Activated naive CD4-positive, alpha-beta T cell treated with anti-CD3 and anti-CD28 coated beads, Interleukin-2, amount 10 ng/mL, durations not matched to agents 7 days and 5 days (primary cell): ENCODE measurements at regions of chr3 and their contacts with region 1.

Region 1: GRCh38 chr3:40317061-40317855 is 7.8 kb downstream of the EIF1B start:
- DNase-seq: peak; percentile 57
- H3K4me3 Mint-ChIP-seq: no peak overlapping the region
- H3K27ac Mint-ChIP-seq: no peak overlapping the region
- H3K4me1 Mint-ChIP-seq: peaks cover 2% of the 10 kb centered on the region
- H3K27me3 Mint-ChIP-seq: peaks cover 4% of the 10 kb centered on the region

Region 2: DNA sequence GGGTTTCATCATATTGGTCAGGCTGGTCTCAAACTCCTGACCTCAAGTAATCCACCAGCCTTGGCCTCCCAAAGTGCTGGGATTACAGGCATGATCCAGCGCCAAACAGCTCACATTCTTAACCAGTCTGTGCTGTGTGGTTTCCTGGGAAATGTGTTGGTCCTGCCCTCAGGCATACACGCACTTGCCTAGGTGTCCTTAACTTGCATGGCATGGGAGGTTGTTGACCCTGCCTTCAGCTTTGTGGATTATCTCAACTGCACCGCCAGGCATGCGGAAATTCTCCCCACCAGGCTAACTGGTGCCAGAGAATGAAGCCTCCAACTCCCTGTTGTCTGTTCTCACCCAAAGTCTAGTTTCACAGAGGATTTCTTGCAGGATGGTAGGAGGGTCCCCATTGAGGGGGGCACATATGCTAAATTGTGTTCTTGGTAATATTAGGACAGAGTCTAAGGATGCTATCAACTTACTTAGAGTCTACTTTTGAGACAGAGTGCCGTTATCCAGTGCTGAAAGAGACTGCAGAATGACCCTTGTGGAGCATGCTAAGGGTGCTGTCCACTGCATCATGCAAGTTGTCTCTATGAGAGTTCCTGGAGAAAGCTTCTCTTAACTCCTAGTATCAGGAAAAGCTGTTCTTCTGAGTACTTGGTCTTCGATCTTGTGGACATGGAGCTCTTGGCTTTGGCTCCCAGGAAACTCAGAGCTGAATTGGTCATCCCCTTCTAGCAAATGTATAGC is 69.4 kb before region 1 on chr3:
- CTCF ChIA-PET with region 1: no interaction called
- DNase-seq: no peak
- H3K4me3 Mint-ChIP-seq: no peak overlapping the region
- H3K27ac Mint-ChIP-seq: no peak overlapping the region
- H3K4me1 Mint-ChIP-seq: no peaks in the 10 kb centered on the region
- H3K27me3 Mint-ChIP-seq: no peaks in the 10 kb centered on the region

Region 3: DNA sequence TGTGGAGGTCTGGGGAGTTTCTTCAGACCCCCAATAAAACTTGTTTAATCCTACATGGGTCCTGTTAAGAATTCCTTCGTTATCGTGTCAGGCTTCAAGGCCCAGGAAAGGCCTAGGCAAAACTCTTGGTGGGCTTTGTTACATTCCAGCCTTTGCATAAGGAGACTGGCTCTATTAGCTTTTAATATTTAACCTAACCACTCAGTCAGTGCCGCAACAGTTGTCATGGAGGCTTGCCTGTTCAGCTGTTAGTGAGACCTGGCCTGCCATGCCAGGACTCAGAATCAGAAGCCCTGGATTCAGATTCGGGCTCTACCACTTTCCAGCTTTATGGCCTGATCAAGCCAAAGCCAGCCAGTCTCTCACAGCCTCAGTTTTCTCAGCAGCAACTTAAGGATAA is 11.8 kb after region 1 on chr3:
- CTCF ChIA-PET with region 1: interaction called, 11 read pairs
- DNase-seq: no peak
- H3K4me3 Mint-ChIP-seq: no peak overlapping the region
- H3K27ac Mint-ChIP-seq: no peak overlapping the region
- H3K4me1 Mint-ChIP-seq: peaks cover 3% of the 10 kb centered on the region
- H3K27me3 Mint-ChIP-seq: peaks cover 13% of the 10 kb centered on the region

Region 4: GRCh38 chr3:40432793-40433192 is 115.5 kb after region 1 on chr3:
- CTCF ChIA-PET with region 1: no interaction called
- DNase-seq: no peak
- H3K4me3 Mint-ChIP-seq: no peak overlapping the region
- H3K27ac Mint-ChIP-seq: no peak overlapping the region
- H3K4me1 Mint-ChIP-seq: no peaks in the 10 kb centered on the region
- H3K27me3 Mint-ChIP-seq: peaks cover 6% of the 10 kb centered on the region